Heart right ventricle (tissue), 16 donors: ENCODE measurements at regions of chr7 and their contacts with region 1.

Region 1: GRCh38 chr7:76011442-76011861 is 17.1 kb upstream of the TMEM120A start:
- DNase-seq: peak; percentile 54 to 77
- ATAC-seq: peak; percentile 83 to 94 (median 90)
- H3K4me3 ChIP-seq: peak overlapping the region in 2 of 10 donors; percentile 1 to 2
- H3K27ac ChIP-seq: peak overlapping the region; percentile 14 to 81 (median 60)
- H3K4me1 ChIP-seq: peaks cover 0 to 40% (median 27%) of the 10 kb centered on the region in 9 donors
- H3K27me3 ChIP-seq: no peaks in the 10 kb centered on the region
- CTCF ChIP-seq: no peak

Region 2: DNA sequence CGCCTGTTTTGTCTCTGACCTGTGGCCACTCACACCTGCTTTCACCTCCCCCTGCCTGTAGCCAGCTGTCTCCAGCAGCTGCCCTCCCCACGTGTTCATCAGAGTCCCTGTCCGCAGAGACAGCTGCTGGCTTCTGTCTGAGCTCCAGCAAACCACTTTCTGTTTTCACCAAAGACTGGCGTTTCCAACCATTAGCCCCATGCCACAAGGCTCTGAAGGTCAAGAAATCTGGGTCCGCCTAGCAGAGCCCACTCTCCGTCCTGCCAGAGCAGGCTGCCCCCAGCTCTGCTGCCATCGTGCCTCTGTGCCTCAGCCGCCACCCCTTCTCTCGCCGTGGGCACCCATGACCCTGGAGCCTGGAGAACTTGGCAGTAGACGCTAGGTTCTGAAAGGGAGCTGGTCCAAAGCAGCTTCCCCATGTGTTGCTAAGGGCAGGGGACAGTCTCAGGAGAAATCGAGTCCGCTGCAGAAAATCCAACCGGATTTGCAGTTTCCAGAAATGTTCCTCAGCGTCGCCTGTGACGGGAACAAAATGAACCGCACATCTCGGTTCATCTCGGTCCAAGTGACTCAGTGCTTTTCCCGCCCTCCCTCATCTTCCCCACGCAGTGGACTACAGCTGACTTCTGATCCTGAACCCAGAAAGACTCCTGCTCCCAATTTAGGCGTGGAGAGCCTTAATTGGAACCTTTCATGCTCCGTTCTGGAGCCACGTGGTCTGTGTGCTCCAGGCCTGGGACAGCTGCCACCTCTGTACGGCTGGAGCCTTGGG is 45.1 kb before region 1 on chr7:
- intact Hi-C with region 1: loop called in 1 of 10 experiments (anchors 5 kb)
- DNase-seq: peak; percentile 52 to 80
- ATAC-seq: peak; percentile 46 to 78 (median 67)
- H3K4me3 ChIP-seq: peak overlapping the region in 4 of 10 donors; percentile 4 to 31 (median 14)
- H3K27ac ChIP-seq: peak overlapping the region; percentile 70 to 95 (median 82)
- H3K4me1 ChIP-seq: peaks cover 36 to 97% (median 78%) of the 10 kb centered on the region in 9 donors
- H3K27me3 ChIP-seq: no peaks in the 10 kb centered on the region
- CTCF ChIP-seq: no peak